ENCODE measurements at regions of chr22 and their contacts with region 1.

Region 1: GRCh38 chr22:37229805-37230672 is 14.0 kb downstream of the RAC2 start:
- DNase-seq: peak; percentile 85
- H3K4me3 Mint-ChIP-seq: peak overlapping the region; percentile 74
- H3K27ac Mint-ChIP-seq: peak overlapping the region; percentile 95
- H3K4me1 Mint-ChIP-seq: peaks cover 81% of the 10 kb centered on the region
- H3K27me3 Mint-ChIP-seq: no peaks in the 10 kb centered on the region

Region 2: DNA sequence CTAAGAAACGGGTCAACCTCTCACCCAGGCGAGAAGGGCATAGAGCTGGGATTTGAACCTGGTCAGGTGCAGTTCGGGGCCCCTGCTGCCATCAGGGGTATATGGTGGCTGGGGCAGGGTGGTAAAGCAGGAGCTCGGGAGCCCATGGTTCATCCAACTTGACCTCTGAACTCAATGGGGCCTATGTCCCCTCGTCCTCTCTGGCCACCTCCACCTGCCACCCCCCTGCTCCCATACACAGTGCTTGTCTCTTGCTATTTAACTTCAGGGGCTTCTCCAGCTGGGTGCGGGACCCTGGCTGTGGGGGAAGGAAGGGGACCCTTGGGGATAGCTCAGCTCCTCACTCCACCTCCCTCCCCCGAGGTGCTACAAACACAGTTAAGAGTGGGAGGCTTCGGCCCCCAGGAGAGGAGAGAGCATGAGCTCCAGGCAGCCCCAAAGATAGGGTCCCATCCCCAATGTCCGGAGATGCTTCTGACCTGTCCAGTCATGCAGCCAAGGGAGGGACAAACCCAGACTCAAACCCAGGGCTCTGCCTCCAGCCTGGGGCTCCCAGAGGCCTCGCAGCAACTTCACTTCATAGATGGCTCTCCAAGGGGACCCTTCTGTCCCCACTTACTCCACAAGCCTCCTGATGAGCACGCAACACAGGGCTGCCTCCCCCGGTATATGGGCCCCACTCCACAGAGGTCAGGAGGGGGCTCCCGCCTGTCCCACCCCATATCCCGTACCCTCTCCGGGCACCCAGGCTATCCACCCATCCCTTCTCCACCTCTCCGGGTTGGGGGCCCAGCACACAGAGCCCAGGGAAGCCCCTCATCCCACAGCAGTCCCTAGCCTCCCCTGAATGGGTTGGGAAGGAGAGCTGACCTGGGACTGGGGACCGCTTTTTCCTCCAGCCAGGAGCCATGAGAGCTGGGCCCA is 81.0 kb before region 1 on chr22:
- intact Hi-C with region 1: loop called (anchors 5 kb)
- DNase-seq: no peak
- H3K4me3 Mint-ChIP-seq: peak overlapping the region; percentile 92
- H3K27ac Mint-ChIP-seq: peak overlapping the region; percentile 94
- H3K4me1 Mint-ChIP-seq: peaks cover 46% of the 10 kb centered on the region
- H3K27me3 Mint-ChIP-seq: no peaks in the 10 kb centered on the region

Region 3: GRCh38 chr22:37218771-37219411 is 11.1 kb before region 1 on chr22:
- intact Hi-C with region 1: loop called (anchors 1 kb)
- DNase-seq: peak; percentile 70
- H3K4me3 Mint-ChIP-seq: peak overlapping the region; percentile 66
- H3K27ac Mint-ChIP-seq: peak overlapping the region; percentile 80
- H3K4me1 Mint-ChIP-seq: peaks cover 65% of the 10 kb centered on the region
- H3K27me3 Mint-ChIP-seq: no peaks in the 10 kb centered on the region

Region 4: DNA sequence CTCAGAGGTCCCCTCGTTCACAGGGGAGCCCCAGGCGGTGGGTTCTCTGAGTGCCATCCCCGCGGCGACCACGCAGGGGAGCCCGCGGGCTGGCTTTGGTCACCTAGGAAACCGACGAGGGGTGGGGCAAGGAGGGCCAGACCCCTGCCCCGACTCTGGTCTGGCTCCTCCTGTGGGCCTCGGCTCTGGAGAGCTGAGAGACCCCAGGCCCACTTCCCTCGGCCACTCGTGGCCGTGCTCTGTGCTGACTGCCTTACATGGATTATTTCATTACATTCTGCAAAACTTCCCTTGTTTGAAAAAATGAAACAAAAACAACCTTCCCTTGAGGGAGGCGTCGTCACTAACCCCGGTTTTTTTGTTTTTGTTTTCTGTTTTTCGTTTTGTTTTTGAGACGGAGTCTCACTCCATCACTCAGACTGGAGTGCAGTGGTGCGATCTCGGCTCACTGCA is 37.1 kb after region 1 on chr22:
- intact Hi-C with region 1: loop called (anchors 5 kb)
- DNase-seq: peak; percentile 71
- H3K4me3 Mint-ChIP-seq: peak overlapping the region; percentile 80
- H3K27ac Mint-ChIP-seq: peak overlapping the region; percentile 87
- H3K4me1 Mint-ChIP-seq: peaks cover 39% of the 10 kb centered on the region
- H3K27me3 Mint-ChIP-seq: peaks cover 5% of the 10 kb centered on the region

Region 5: DNA sequence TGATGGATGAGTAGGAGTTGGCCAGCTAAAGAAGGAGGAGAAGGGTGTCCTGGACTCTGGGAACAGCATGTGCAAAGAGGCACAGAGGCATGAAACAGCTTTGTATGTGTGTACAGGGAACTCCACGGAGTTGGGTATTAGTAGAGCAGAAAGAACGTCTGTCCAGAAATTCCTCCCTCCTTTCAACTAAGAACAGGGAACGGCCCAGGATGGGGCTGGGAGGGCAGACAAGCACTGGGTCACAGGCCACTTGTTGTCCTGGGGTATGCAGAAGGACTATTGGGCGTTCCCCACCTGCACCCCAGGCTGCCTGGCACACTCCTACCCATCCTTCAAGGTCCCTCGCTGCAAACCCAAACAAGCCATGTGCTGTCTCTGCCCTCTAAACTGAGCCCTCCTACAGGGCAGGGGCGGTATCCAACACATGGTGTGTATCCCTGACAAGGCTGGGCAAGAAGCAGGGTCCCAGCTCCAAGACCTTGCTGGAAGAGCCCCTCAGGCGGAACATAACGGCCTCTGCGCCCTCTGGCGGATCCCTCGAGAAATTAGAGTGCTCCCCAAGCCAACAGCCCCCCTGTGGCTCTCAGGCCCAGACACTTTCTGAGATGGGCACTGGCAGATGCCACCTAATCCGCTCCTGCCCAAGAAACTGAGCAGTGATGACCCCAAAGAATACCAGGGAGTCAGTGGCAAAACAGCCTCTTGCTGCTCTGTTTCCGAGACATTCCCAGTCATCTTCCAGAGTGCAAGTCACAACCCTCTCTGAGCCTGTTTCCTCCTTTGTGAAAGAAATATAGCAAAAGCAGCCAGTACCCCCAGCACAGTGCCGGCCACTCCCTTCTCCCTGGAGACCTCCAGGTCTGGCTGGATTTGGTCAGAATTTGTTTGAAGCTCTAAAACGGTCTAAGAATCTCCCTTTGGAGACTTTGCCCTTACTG is 198.9 kb after region 1 on chr22:
- intact Hi-C with region 1: no loop called
- DNase-seq: peak; percentile 26
- H3K4me3 Mint-ChIP-seq: no peak overlapping the region
- H3K27ac Mint-ChIP-seq: no peak overlapping the region
- H3K4me1 Mint-ChIP-seq: peaks cover 14% of the 10 kb centered on the region
- H3K27me3 Mint-ChIP-seq: peaks cover 57% of the 10 kb centered on the region